SK-N-SH (cell line): ENCODE measurements at regions of chr17 and their contacts with region 1.

Region 1: DNA sequence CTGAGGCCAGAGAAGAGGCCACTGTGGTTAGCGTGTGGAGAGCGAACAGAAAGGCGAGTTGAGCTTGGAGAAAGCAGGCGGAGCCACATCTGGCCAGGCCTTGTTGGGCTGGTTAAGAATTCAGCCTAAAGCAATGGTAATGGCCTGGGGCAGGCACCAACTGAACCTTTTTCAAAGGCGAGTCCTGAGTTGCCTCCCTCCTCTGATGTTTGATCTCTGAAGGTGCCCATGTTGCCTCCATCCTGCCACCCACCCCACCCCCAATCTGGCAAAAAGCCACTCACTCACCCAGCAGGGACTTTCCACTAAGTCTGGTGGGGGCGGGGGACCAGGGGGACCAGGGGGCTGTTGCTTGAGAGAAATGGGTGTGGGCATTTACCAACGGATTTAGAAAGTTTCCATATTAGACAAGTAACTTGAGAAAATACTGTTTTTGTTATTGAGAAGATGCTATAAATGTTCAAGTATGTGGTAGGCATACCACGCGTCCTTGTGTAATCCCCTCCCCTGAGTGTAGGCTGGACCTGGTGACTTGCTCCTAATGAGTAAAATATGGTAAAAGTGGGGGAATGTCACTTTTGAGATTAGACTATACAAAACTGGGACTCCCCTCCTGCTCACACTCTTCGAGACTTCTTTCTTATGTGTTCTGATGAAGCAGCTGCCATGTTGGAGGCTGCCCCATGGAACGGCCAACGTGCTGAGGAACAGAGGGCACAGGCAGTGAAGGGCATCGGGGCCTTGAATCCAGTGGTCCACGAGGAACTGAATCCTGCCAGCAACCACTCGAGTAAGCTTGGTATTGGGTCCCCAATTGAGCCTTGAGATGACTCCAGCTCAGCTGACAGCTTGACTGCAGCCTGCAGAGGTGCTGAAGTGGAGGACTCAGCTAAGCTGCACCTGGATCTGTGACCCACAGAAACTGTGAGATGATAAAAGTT is 29.9 kb upstream of the TNS4 start:
- DNase-seq: no peak
- H3K4me3 ChIP-seq: no peak overlapping the region
- H3K27ac ChIP-seq: no peak overlapping the region
- H3K4me1 ChIP-seq: peaks cover 0 to 7% of the 10 kb centered on the region in 2 experiments; a peak in 1 of 4 replicates
- H3K27me3 ChIP-seq: no peaks in the 10 kb centered on the region
- CTCF ChIP-seq: no peak
- EP300 ChIP-seq: no peak
- RAD21 ChIP-seq: no peak

Region 2: DNA sequence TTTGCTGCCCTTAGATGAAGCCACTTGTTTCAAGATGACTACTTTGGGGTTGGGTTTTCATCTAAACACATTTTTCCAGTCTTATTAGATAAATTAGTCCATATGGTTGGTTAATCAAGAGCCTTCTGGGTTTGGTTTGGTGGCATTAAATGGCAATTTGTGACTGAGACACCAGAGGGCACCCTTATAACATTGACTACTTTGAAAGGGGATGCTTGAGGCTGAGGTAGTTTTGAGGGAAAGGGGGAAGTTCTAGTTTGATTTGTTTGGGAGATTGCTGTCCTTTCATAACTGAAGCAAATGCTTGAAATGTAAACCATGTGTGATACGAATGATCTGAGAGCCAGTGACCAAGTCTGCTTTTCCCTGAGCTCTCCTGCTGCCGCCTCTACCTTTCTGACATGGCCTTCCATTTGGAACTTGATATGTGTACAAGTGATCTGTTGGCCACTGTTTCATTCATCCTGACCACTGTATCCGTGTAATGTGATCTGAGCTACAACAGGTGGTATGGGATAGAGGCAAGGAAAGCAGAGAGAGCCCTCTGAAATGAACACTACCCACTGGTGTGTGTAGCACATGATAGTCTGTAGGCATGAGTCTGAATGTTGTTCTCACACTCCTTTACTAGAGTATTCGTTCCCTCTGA is 228.2 kb before region 1 on chr17:
- CTCF ChIA-PET with region 1: interaction called, 33 read pairs
- POLR2A ChIA-PET with region 1: no interaction called
- DNase-seq: peak; percentile 63
- H3K4me3 ChIP-seq: no peak overlapping the region; a peak in 1 of 4 replicates
- H3K27ac ChIP-seq: peak overlapping the region; percentile 82 to 99
- H3K4me1 ChIP-seq: peaks cover 48 to 53% of the 10 kb centered on the region in 2 experiments
- H3K27me3 ChIP-seq: no peaks in the 10 kb centered on the region
- CTCF ChIP-seq: peak; percentile 86
- EP300 ChIP-seq: 0 out of 4 replicates have a peak, but pooled peaks of 1 of the 2 experiments have one; percentile 45
- RAD21 ChIP-seq: peak; percentile 96

Region 3: DNA sequence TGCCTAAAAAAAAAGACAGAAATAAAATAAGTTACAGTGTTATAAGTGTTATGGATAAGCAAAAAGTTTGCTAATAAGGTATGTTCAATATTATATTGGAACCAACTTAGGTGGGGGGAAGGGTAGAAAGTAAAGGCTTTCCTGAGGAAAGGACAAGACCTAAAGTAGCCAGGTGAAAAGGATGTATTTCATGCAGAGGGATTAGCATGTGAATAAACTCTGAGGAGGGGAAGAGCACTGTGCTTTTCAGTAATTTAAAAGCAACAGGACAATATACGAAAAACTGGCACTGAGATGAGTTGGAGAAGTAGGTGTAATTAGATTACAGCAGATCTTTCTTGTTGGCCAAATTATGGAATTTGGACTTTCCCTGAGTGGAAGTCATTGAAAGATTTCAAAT is 121.2 kb before region 1 on chr17:
- CTCF ChIA-PET with region 1: interaction called, 22 read pairs
- POLR2A ChIA-PET with region 1: no interaction called
- DNase-seq: no peak
- H3K4me3 ChIP-seq: no peak overlapping the region
- H3K27ac ChIP-seq: 0 out of 4 replicates have a peak overlapping the region, but pooled peaks of 1 of the 2 experiments have one; percentile 0
- H3K4me1 ChIP-seq: no peaks in the 10 kb centered on the region
- H3K27me3 ChIP-seq: no peaks in the 10 kb centered on the region
- CTCF ChIP-seq: no peak
- EP300 ChIP-seq: no peak
- RAD21 ChIP-seq: no peak

Region 4: DNA sequence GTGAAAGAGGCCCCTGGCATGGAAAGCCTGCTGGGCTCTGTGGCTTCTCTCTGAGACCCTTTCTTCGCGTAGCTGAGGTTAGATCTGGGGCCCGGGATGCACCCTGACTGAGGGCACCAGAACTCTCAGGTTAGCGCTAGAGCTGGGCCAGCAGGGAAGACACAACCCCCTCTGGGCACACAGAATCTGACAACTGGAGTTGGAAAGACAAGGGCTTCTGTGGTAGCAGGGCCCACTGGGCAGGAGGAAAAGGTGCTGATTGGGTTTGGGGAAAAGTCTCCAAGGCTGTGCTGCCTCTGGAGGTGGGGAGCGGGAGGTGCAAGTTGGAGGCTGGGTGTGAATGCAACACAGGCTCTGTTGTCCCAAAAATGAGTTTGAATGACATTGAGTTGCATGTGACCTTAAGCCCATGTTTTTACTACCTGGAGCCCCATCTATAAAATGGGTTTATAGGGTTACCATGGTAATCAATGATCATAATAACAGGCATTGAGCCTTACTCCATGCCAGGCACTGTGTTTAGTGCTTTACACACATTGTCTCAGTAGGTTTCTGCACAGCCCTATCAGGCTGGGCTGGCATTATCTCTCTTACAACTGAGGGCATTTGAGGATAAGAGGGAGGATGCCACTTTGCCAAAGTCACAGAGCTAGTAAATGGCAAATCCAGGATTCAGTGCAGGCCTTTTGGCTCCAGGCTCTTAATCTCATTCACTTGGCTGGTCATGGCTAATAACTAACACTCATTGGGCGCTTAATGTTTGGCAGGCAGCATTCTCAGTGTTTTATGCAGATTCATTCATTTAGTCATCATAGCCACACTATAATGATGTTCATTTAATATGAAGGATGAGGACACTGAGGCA is 97.5 kb before region 1 on chr17:
- CTCF ChIA-PET with region 1: interaction called, 332 read pairs
- POLR2A ChIA-PET with region 1: no interaction called
- DNase-seq: peak; percentile 58
- H3K4me3 ChIP-seq: no peak overlapping the region
- H3K27ac ChIP-seq: peak overlapping the region; percentile 48 to 99
- H3K4me1 ChIP-seq: peaks cover 9 to 34% of the 10 kb centered on the region in 2 experiments; a peak in 3 of 4 replicates
- H3K27me3 ChIP-seq: no peaks in the 10 kb centered on the region
- CTCF ChIP-seq: peak; percentile 59
- EP300 ChIP-seq: peak in 1 of 2 experiments; percentile 57; a peak in 2 of 4 replicates
- RAD21 ChIP-seq: peak; percentile 52

Region 5: DNA sequence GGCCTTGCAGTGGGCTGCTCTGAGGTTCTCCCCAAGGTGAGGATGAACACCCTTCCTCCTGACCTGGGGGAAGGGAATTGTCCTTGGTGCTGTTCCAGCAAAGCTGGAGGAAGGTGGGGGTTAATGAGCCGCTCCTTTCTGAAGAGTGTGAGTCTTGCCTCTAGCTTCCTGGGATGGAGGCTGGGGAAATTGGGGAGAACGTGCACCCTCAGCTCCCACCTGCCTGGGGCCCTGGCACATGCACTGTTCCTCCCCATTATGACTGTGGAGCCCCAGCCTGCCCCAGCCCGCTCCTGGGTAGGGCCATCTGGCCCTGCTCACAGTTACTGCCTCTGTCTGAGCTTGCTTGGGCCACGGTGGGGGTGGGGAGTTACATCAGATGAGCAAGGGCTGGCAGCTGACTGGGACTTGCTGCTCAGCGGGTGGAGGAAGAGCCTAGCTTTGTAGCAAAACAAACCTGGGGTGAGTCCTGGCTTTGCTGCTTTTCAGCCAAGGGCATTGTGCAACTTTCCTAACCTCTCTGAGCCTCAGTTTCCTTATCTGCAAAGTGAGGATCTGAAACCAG is 41.0 kb before region 1 on chr17:
- CTCF ChIA-PET with region 1: interaction called, 30 read pairs
- POLR2A ChIA-PET with region 1: no interaction called
- DNase-seq: peak; percentile 89
- H3K4me3 ChIP-seq: no peak overlapping the region
- H3K27ac ChIP-seq: peak overlapping the region in 1 of 2 experiments; percentile 84; a peak in 2 of 4 replicates
- H3K4me1 ChIP-seq: peaks cover 24 to 34% of the 10 kb centered on the region in 2 experiments
- H3K27me3 ChIP-seq: no peaks in the 10 kb centered on the region
- CTCF ChIP-seq: no peak
- EP300 ChIP-seq: peak in 1 of 2 experiments; percentile 62; a peak in 1 of 4 replicates
- RAD21 ChIP-seq: peak; percentile 45

Region 6: DNA sequence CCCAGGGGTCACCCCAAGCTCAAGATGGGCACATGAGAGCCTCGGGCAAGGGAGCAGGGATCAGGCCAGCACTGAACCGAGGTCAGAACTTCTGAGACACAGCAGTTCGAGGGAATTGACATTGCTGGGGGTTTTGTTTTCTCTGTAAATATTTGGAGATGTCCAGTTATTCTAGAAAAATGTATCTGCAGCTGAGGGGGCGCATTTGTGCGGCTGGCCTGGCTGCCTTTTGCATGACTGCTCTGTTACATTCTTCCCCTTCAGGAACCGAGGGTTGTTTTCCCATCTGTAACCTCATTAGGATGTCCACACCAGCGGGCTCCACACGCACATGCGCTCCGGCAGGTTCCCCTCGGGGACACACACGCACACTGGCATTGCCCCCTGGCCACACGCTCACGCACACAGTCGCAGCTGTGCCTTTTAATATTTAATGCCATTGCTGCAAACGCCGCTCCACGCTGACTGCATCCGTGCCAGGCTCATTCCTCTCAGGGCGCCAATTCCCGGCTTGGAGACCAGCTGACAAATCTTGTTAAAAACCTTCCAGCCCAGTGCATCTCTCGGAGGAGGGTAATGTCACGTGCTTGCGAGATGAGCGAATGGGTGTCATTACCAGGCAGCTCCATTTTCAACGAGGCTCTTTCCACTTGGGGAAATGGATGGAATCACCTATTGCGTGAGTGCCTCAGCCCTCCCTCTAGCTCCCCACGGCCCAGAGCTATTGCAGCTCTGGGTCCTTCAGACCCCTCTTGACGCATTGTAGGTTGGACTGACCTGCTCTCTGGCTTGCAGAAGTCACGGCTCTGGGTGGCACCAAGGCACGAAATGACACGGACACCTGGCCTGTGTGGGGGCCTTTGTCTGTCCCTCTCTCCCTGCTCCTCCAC is 20.8 kb after region 1 on chr17:
- CTCF ChIA-PET with region 1: interaction called, 381 read pairs
- POLR2A ChIA-PET with region 1: interaction called, 3 read pairs
- DNase-seq: no peak
- H3K4me3 ChIP-seq: no peak overlapping the region
- H3K27ac ChIP-seq: peak overlapping the region; percentile 55 to 83; a peak in 3 of 4 replicates
- H3K4me1 ChIP-seq: peaks cover 15 to 77% of the 10 kb centered on the region in 2 experiments; a peak in 3 of 4 replicates
- H3K27me3 ChIP-seq: no peaks in the 10 kb centered on the region
- CTCF ChIP-seq: no peak
- EP300 ChIP-seq: 0 out of 4 replicates have a peak, but pooled peaks of 1 of the 2 experiments have one; percentile 10
- RAD21 ChIP-seq: no peak